T-cell (primary cell): ENCODE measurements at regions of chr6 and their contacts with region 1.

Region 1: DNA sequence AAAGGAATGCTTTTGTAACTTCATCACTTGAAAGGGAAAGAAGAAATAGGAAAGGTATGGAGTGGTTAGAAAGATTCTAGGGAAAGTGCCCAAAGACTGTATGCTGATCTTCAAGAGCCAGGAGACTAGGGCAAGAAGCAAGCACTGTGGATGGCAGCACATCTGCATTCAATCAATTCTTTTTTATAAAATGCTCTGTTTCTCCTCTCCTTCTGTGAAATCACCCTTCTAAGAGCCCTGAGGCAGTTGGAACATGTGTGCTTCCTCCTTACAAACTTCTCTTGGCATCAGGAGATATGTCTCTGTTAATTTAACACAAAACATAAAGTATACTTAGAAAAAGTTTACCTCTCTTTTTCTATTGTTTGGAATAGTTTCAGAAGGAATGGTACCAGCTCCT is 1162.2 kb upstream of the GJE1 start:
- DNase-seq: no peak
- ATAC-seq: no peak
- H3K4me3 ChIP-seq: no peak overlapping the region
- H3K4me3 Mint-ChIP-seq: no peak overlapping the region
- H3K27ac ChIP-seq: no peak overlapping the region
- H3K27ac Mint-ChIP-seq: no peak overlapping the region
- H3K4me1 ChIP-seq: no peaks in the 10 kb centered on the region
- H3K4me1 Mint-ChIP-seq: no peaks in the 10 kb centered on the region
- H3K27me3 ChIP-seq: no peaks in the 10 kb centered on the region
- H3K27me3 Mint-ChIP-seq: peaks cover 3 to 4% of the 10 kb centered on the region in 2 donors

Region 2: GRCh38 chr6:140956571-140957369 is 13.7 kb before region 1 on chr6:
- CTCF ChIA-PET with region 1: no interaction called
- POLR2A ChIA-PET with region 1: no interaction called
- DNase-seq: no peak
- ATAC-seq: no peak
- H3K4me3 ChIP-seq: no peak overlapping the region
- H3K4me3 Mint-ChIP-seq: no peak overlapping the region
- H3K27ac ChIP-seq: no peak overlapping the region
- H3K27ac Mint-ChIP-seq: no peak overlapping the region
- H3K4me1 ChIP-seq: no peaks in the 10 kb centered on the region
- H3K4me1 Mint-ChIP-seq: no peaks in the 10 kb centered on the region
- H3K27me3 ChIP-seq: no peaks in the 10 kb centered on the region
- H3K27me3 Mint-ChIP-seq: no peaks in the 10 kb centered on the region

Region 3: DNA sequence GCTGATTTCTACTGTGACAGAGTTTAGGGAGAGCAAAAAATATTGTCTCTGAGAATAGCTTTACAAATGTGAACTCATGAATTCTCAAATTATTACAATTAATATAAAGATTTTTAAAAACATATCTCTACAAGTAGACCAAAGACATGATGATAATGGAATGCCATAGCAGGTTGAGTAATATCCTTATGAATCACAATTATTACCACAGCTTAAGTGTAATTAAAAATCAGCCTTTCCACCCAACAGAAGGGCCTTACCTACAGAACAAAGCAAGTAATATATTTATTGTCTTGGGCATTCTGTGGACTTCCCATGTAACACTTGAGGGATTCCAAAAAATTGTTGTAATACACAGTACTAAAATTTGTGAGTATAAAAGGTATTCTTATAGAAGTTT is 62.6 kb after region 1 on chr6:
- CTCF ChIA-PET with region 1: no interaction called
- POLR2A ChIA-PET with region 1: no interaction called
- DNase-seq: no peak
- ATAC-seq: no peak
- H3K4me3 ChIP-seq: no peak overlapping the region
- H3K4me3 Mint-ChIP-seq: no peak overlapping the region
- H3K27ac ChIP-seq: no peak overlapping the region
- H3K27ac Mint-ChIP-seq: no peak overlapping the region
- H3K4me1 ChIP-seq: no peaks in the 10 kb centered on the region
- H3K4me1 Mint-ChIP-seq: no peaks in the 10 kb centered on the region
- H3K27me3 ChIP-seq: no peaks in the 10 kb centered on the region
- H3K27me3 Mint-ChIP-seq: no peaks in the 10 kb centered on the region

Region 4: DNA sequence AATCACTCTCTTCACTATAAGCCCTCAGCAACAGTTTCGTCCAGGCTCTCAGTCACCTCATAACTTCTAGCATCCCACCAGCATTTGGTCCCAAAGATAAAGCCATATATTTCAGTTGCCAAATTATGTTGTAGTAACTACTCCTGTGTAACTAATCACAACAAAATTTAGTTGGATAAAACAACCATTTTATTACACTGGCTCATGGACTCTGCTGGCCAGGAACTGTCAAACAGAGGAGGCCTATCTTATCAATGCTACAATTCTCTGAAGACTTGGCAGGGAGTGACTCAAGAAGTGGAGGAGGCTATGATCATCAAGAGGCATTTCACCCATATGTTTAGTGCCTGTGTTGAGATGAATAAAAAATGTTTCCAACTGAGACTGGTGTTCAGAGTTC is 80.0 kb after region 1 on chr6:
- CTCF ChIA-PET with region 1: no interaction called
- POLR2A ChIA-PET with region 1: interaction called in 1 of 2 experiments, 22 read pairs
- DNase-seq: no peak
- ATAC-seq: no peak
- H3K4me3 ChIP-seq: no peak overlapping the region
- H3K4me3 Mint-ChIP-seq: no peak overlapping the region
- H3K27ac ChIP-seq: no peak overlapping the region
- H3K27ac Mint-ChIP-seq: no peak overlapping the region
- H3K4me1 ChIP-seq: no peaks in the 10 kb centered on the region
- H3K4me1 Mint-ChIP-seq: no peaks in the 10 kb centered on the region
- H3K27me3 ChIP-seq: no peaks in the 10 kb centered on the region
- H3K27me3 Mint-ChIP-seq: peaks cover 0 to 8% of the 10 kb centered on the region in 2 donors